Caco-2 (cell line): ENCODE measurements at regions of chr5 and their contacts with region 1.

Region 1: GRCh38 chr5:80109646-80110478 is 74.7 kb downstream of the THBS4 start:
- DNase-seq: no peak
- H3K4me3 ChIP-seq: no peak overlapping the region
- H3K4me3 Mint-ChIP-seq: peak overlapping the region; percentile 12
- H3K27ac Mint-ChIP-seq: peak overlapping the region; percentile 91
- H3K4me1 ChIP-seq: peaks cover 52% of the 10 kb centered on the region
- H3K4me1 Mint-ChIP-seq: peaks cover 83% of the 10 kb centered on the region
- H3K27me3 ChIP-seq: no peaks in the 10 kb centered on the region
- H3K27me3 Mint-ChIP-seq: no peaks in the 10 kb centered on the region
- CTCF ChIP-seq: no peak

Region 2: DNA sequence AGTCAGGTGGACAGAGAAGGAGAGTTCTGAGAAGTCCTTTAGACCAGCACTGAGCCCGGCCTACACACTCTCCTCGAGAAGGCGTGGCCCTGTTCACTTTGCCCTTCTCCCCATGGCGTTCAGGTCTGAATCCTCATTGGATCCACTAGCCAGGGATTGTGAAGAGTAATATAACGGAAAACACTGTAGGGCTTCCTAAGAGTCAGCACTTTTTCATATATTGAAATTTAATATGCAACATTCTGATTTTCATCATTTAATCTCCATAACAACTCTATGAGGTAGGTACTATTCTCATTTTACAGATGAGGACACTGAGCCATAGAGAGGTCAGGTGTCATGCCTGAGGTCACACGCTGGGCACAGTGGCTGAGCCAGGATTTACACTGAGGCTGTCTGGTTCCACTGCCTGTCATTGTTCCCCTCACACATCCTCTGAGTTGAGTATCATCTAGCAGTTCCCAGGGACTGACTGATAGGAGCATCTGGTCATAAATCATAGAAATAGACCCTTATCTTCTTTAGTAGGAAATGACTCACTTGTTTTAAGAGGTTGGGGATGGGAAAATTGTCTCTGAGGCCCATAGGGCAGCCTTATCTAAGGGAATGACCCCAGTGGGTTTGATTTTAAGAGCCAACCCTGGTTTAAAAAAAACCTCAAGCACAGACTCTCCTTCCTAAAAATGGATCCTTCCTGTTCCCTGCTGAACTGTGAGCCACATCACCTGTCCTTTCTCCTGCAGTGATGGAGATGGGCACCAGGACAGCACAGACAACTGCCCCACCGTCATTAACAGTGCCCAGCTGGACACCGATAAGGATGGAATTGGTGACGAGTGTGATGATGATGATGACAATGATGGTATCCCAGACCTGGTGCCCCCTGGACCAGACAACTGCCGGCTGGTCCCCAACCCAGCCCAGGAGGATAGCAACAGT is 33.5 kb before region 1 on chr5:
- CTCF ChIA-PET with region 1: no interaction called
- POLR2A ChIA-PET with region 1: no interaction called
- intact Hi-C with region 1: no loop called
- DNase-seq: no peak
- H3K4me3 ChIP-seq: no peak overlapping the region
- H3K4me3 Mint-ChIP-seq: no peak overlapping the region
- H3K27ac Mint-ChIP-seq: no peak overlapping the region
- H3K4me1 ChIP-seq: no peaks in the 10 kb centered on the region
- H3K4me1 Mint-ChIP-seq: no peaks in the 10 kb centered on the region
- H3K27me3 ChIP-seq: no peaks in the 10 kb centered on the region
- H3K27me3 Mint-ChIP-seq: no peaks in the 10 kb centered on the region
- CTCF ChIP-seq: no peak

Region 3: DNA sequence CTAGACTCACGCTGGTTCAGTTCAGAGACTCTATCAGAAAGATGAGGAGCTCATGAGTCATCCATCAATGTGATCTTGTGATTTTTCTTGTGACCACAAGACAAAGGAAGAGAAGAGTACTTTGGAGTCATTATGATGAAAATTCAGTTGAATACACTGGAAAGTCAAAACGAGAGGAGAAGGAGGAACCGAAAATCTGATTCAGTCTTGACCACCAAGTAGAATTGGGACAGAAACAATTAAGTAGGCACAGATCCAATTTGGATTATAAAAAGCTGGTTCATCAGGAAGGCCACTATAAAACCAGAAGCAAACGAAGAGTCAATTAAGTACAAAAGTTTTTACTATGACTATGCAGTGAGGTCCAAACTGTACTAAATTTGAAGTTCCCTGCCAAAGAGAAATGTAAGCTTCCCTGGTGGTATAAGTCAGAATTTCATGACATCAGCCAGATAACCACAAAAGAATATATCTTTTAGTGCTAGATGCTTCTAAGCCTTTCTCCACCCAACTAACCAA is 16.2 kb after region 1 on chr5:
- CTCF ChIA-PET with region 1: no interaction called
- POLR2A ChIA-PET with region 1: no interaction called
- intact Hi-C with region 1: loop called (anchors 1 kb)
- DNase-seq: no peak
- H3K4me3 ChIP-seq: no peak overlapping the region
- H3K4me3 Mint-ChIP-seq: no peak overlapping the region
- H3K27ac Mint-ChIP-seq: peak overlapping the region; percentile 5
- H3K4me1 ChIP-seq: peaks cover 36% of the 10 kb centered on the region
- H3K4me1 Mint-ChIP-seq: peaks cover 31% of the 10 kb centered on the region
- H3K27me3 ChIP-seq: no peaks in the 10 kb centered on the region
- H3K27me3 Mint-ChIP-seq: no peaks in the 10 kb centered on the region
- CTCF ChIP-seq: peak in 1 of 2 experiments; percentile 17

Region 4: DNA sequence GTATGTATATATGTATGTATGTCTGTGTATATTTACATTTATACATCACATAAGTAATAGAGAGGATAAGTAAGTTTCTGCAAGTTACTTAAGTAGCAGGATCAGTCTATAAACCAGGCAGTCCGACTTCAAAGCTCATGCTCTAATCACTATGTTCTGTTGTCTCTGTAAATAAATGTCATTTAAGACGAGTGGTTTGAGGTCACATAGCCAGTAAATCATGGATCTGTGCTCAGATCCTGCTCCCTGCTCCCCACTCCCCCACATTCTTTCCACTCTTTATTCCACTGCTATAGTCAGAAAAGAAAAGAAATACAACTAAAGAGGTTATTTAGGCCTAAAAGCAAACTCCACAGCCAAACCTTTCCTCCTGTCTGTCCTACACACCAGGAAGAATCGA is 55.6 kb after region 1 on chr5:
- CTCF ChIA-PET with region 1: no interaction called
- POLR2A ChIA-PET with region 1: no interaction called
- intact Hi-C with region 1: loop called (anchors 1 kb)
- DNase-seq: peak; percentile 60 to 64
- H3K4me3 ChIP-seq: no peak overlapping the region
- H3K4me3 Mint-ChIP-seq: peak overlapping the region; percentile 27
- H3K27ac Mint-ChIP-seq: peak overlapping the region; percentile 70
- H3K4me1 ChIP-seq: peaks cover 47% of the 10 kb centered on the region
- H3K4me1 Mint-ChIP-seq: peaks cover 66% of the 10 kb centered on the region
- H3K27me3 ChIP-seq: no peaks in the 10 kb centered on the region
- H3K27me3 Mint-ChIP-seq: no peaks in the 10 kb centered on the region
- CTCF ChIP-seq: no peak